ENCODE measurements at regions of chr6 and their contacts with region 1.

Region 1: DNA sequence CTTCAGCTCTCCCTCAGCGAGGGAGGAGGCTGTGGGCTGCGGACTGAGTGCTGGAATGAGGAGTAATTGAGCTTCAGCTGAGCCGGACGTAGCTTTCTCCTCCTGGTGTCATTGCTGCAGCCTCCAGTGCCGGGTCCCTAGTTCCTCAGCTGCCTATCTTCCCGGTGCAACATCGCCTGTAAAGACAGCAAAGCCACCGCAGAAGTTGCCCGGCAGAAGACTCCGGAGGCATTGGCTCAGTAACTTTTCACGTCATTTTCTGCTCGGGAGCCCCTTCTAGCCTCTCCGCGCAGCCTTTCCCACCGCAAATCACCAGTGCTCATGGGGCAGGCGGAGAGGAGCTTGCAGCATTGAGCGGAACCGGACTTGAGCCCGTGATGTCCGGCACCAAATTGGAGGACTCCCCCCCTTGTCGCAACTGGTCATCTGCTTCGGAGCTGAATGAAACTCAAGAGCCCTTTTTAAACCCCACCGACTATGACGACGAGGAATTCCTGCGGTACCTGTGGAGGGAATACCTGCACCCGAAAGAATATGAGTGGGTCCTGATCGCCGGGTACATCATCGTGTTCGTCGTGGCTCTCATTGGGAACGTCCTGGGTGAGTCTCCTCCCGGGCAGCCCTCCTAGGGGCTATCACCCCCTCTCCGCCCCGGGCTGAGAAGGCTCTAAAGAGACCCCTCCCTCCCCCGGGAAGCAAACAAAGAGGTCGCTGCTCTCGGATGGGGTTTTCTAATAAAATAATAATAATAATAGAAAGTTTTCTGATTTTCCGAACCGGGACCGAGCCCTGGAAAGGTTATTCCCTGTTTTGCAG is at the start of gene HCRTR2:
- DNase-seq: no peak
- ATAC-seq: no peak
- H3K4me3 ChIP-seq: no peak within 1 kb of the TSS
- H3K27ac ChIP-seq: no peak within 1 kb of the TSS
- H3K4me1 ChIP-seq: no peaks in the 10 kb centered on the region
- H3K27me3 ChIP-seq: peaks cover 42% of the 10 kb centered on the region
- CTCF ChIP-seq: no peak
- total RNA-seq, gene HCRTR2: not detected in 2 replicates

Region 2: DNA sequence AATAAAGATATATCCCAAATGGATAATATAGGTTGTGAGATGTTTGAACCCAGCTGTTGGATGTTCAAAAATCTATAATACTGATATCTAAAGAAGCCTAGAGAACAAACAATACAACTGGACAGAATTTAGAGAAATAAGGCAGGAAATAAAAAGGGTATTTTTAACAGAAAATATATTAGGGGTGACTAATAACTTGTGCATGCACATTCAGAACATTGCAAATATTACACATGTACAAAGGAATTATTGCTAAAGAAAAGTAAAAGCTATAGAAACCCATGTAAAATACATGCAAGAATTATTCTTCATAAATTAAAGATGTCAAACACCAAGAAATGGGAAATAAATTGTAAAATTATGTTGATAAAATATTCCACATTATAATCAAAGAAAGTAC is 32.8 kb before region 1 on chr6:
- CTCF ChIA-PET with region 1: no interaction called
- POLR2A ChIA-PET with region 1: interaction called, 13 read pairs
- intact Hi-C with region 1: no loop called
- DNase-seq: peak; percentile 52
- ATAC-seq: peak; percentile 78
- H3K4me3 ChIP-seq: no peak overlapping the region
- H3K27ac ChIP-seq: no peak overlapping the region
- H3K4me1 ChIP-seq: peaks cover 9% of the 10 kb centered on the region
- H3K27me3 ChIP-seq: no peaks in the 10 kb centered on the region
- CTCF ChIP-seq: no peak

Region 3: DNA sequence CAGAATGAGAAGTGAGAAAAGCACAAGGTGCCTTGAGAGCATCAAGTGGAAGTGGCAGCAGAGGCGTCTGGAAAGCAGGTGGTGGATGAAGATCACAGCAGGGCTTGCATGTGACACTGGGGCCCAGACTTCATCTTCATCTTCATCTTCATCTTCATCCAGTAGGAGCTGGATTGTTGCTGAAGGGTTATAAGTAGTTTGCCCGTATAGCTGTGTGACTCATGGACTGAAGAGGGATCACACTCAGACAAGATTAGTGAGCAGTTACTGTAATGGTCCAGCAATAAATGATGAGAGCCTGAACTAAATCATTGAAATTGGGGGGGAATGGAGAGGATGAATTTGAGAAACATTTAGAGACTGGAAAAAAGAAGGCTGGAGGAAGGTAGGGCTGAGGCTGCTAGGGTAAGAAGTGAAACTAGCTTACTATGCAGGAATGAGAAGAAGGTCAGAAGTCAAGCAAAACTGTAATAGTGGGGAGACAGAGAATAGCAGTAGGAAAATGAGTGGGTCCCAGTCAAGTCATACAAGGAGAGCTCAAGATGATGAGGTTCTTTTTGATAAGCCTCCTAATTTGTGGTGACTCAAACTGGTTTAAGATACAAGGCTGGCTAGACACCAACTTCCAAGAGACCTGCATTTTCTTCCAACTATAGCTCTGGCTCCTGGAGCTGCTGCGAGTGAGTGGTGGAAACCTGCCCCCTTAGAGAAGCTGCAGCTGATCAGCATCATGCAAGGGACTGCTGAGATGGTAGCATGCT is 1688.2 kb after region 1 on chr6:
- CTCF ChIA-PET with region 1: no interaction called
- POLR2A ChIA-PET with region 1: no interaction called
- intact Hi-C with region 1: no loop called
- DNase-seq: no peak
- ATAC-seq: no peak
- H3K4me3 ChIP-seq: no peak overlapping the region
- H3K27ac ChIP-seq: no peak overlapping the region
- H3K4me1 ChIP-seq: peaks cover 64% of the 10 kb centered on the region
- H3K27me3 ChIP-seq: no peaks in the 10 kb centered on the region
- CTCF ChIP-seq: no peak